Activated CD8-positive, alpha-beta T cell treated with anti-CD3 and anti-CD28 coated beads, Interleukin-2, amount 10 ng/mL, durations not matched to agents 7 days and 5 days (primary cell): ENCODE measurements at regions of chr5 and their contacts with region 1.

Region 1: DNA sequence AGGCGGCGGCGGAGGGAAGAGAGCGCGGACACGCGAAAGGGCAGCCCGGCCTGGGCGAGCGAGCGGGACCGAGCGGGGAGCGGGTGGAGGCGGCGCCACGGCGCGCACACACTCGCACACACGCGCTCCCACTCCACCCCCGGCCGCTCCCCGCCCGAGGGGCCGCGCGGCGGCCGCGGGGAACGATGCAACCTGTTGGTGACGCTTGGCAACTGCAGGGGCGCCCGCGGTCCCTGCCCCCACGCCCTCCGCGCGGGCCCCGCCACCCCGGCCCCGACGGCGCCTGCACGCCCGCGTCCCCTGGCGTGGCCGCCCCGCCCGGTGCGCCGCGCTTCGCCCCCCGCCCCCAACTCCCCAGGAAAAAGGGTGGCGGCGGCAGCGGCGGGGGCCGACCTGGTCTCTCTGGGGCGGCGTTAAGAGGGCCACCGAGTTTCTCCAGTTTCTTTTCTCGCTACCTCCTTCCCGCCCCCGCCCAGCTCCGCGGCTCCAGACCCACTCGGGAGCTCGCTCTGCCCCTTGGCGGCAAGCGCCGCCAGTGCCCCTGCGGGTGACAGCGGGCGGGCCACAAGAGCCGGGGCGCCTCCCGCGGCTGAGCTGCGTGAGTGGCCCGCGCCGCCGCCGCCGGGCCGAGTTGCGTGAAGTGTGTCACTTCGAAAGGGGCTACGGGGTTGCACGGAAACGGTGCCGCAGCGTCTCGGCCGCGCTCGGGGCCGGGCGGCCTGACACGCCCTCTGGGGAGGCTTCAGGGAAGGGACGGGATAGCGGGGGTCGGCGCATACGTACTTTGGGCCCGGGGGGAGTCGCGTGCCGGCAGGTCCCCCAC is at the start of gene NR3C1:
- DNase-seq: peak; percentile 87
- ATAC-seq: peak; percentile 69
- H3K4me3 Mint-ChIP-seq: peak within 1 kb of the TSS; percentile 88
- H3K27ac Mint-ChIP-seq: peak within 1 kb of the TSS; percentile 97
- H3K4me1 Mint-ChIP-seq: peaks cover 47% of the 10 kb centered on the region
- H3K27me3 Mint-ChIP-seq: no peaks in the 10 kb centered on the region
- total RNA-seq, gene NR3C1: 54.9 to 55.5 TPM

Region 2: DNA sequence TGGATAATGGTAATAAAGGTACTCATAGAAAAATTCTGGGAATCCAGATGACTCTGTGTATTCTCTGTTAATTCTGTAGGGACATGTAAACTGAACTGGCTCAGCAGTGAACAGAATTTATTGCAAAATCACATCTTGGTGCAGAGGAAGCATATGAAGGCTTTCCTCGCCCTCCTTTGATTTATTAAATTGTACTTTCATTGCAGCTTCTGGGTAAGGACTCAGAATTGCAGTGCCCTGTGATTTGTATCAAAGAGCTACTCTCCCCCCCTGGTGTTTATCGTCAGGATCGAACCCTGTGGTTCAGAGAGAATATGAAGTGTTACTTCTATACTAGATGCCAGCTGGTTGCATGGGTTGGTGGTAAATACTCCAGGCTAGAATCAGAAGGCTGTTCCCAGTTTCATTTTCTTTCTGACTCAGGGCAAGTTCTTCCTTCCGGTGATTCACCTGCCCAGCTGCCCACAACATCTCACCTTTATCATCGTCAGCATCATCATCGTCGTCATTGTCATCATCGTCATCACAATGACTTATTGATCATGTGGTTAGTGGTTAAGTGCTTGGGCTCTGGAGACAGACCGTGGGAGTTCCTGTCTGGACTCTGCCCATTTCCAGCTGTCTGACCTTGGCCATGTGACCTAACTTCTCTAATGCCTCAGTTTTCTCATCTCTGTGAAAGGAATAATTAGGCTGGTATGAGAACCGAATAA is 394.8 kb before region 1 on chr5:
- CTCF ChIA-PET with region 1: interaction called, 43 read pairs
- POLR2A ChIA-PET with region 1: interaction called, 63 read pairs
- DNase-seq: peak; percentile 90
- ATAC-seq: peak; percentile 93
- H3K4me3 Mint-ChIP-seq: peak overlapping the region; percentile 43
- H3K27ac Mint-ChIP-seq: peak overlapping the region; percentile 90
- H3K4me1 Mint-ChIP-seq: peaks cover 76% of the 10 kb centered on the region
- H3K27me3 Mint-ChIP-seq: no peaks in the 10 kb centered on the region

Region 3: DNA sequence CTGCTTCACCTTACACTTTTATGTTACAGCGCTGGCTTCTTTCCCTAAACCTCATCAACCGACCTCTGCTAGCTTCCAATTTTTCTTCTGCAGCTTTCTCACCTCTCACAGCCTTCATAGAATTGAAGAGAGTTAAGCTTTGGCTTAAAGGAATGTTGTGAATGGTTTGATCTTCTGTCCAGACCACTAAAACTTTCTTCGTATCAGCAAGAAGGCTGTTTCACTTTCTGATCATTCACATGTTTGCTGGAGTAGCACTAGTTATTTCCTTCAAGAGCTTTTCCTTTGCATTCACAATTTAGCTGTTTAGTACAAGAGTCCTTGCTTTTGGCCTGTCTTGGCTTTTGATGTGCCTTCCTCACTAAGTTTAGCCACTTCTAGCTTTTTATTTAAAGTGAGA is 49.8 kb before region 1 on chr5:
- CTCF ChIA-PET with region 1: interaction called, 18 read pairs
- POLR2A ChIA-PET with region 1: interaction called, 7 read pairs
- DNase-seq: no peak
- ATAC-seq: peak; percentile 59
- H3K4me3 Mint-ChIP-seq: peak overlapping the region; percentile 75
- H3K27ac Mint-ChIP-seq: peak overlapping the region; percentile 89
- H3K4me1 Mint-ChIP-seq: peaks cover 44% of the 10 kb centered on the region
- H3K27me3 Mint-ChIP-seq: no peaks in the 10 kb centered on the region

Region 4: GRCh38 chr5:143413958-143414669 is 10.3 kb after region 1 on chr5:
- CTCF ChIA-PET with region 1: interaction called, 14 read pairs
- POLR2A ChIA-PET with region 1: interaction called, 6 read pairs
- DNase-seq: no peak
- ATAC-seq: no peak
- H3K4me3 Mint-ChIP-seq: no peak overlapping the region
- H3K27ac Mint-ChIP-seq: peak overlapping the region; percentile 23
- H3K4me1 Mint-ChIP-seq: peaks cover 27% of the 10 kb centered on the region
- H3K27me3 Mint-ChIP-seq: no peaks in the 10 kb centered on the region

Region 5: DNA sequence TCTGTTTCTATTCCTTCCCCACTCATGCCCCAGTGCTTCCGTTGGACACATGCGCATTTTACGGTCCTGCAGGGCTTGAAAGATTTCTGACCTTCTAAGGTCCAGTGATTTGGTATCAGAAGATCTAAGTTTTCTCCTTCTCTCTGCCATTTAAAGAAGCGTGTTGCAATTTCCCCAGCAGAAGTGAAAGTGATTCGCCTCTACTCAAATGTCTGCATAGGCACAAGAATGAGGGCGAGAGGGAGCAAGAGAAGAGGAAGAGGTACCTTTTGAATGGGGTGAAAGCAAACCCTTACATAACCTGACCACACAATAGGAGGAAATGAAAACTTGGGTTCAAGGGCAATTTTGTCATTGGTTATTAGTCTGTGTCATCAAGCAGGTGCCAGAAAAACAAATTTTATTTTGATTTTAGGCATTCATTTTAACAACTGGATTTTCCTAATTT is 31.4 kb after region 1 on chr5:
- CTCF ChIA-PET with region 1: interaction called, 30 read pairs
- POLR2A ChIA-PET with region 1: interaction called, 46 read pairs
- DNase-seq: peak; percentile 56
- ATAC-seq: peak; percentile 77
- H3K4me3 Mint-ChIP-seq: peak overlapping the region; percentile 86
- H3K27ac Mint-ChIP-seq: peak overlapping the region; percentile 94
- H3K4me1 Mint-ChIP-seq: peaks cover 33% of the 10 kb centered on the region
- H3K27me3 Mint-ChIP-seq: no peaks in the 10 kb centered on the region

Region 6: GRCh38 chr5:143850050-143850683 is 446.4 kb after region 1 on chr5:
- CTCF ChIA-PET with region 1: no interaction called
- POLR2A ChIA-PET with region 1: no interaction called
- DNase-seq: no peak
- ATAC-seq: no peak
- H3K4me3 Mint-ChIP-seq: no peak overlapping the region
- H3K27ac Mint-ChIP-seq: no peak overlapping the region
- H3K4me1 Mint-ChIP-seq: peaks cover 5% of the 10 kb centered on the region
- H3K27me3 Mint-ChIP-seq: no peaks in the 10 kb centered on the region